Psoas muscle (tissue), 8 donors: ENCODE measurements at regions of chr10 and their contacts with region 1.

Region 1: GRCh38 chr10:75401569-75402485 is at the start of gene ZNF503:
- DNase-seq: peak; percentile 97
- ATAC-seq: peak; percentile 82 to 86 (median 85)
- H3K4me3 ChIP-seq: peak within 1 kb of the TSS; percentile 90
- H3K27ac ChIP-seq: peak within 1 kb of the TSS; percentile 87
- H3K4me1 ChIP-seq: peaks cover 11% of the 10 kb centered on the region
- H3K27me3 ChIP-seq: peaks cover 4 to 74% (median 5%) of the 10 kb centered on the region in 3 donors
- CTCF ChIP-seq: no peak
- total RNA-seq, gene ZNF503: 2.3 to 5.7 (median 4.7) TPM

Region 2: DNA sequence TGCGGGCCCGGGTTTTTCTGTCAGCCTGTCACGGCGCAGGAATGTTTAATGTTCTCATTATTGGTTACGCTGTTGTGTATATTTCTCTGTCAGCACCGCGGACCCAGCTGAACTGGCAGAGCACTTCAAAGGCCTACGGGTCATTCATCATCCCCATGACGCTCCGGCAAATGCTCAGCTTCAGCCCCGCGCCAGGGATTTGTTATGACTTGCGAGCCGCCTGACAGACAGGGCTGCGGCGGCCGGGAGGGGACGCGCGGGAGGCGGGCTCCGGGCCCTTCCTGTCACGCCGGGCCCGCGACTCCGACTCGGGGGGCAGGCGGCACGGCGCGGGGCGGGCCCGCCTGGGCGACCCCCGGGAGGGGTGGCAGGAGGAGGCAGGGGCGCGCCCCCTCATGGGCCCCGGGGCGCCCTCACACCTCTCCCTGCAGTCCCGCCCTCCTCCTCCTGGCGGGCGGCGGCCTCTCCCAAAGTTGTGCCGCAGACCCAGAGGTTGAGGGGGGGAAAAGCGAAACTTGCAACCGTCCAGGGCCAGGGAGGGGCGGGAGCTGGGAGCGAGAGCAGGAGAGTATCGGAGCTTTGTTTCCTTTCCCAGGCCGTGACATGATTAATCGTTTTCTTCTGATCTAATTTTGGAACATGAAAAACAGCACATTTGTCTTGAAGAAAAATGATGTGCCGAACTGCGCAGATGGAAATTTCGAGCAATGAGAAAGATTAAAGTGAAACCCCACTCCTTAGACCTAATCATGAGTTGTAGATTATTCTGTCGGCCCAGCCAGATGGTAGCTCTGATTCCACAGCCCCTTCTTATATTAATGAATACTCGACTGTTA is 106.7 kb before region 1 on chr10:
- intact Hi-C with region 1: loop called in 1 of 2 experiments (anchors 5 kb)
- DNase-seq: peak; percentile 85 to 90
- ATAC-seq: peak; percentile 83 to 87 (median 84)
- H3K4me3 ChIP-seq: peak overlapping the region; percentile 83
- H3K27ac ChIP-seq: peak overlapping the region; percentile 97
- H3K4me1 ChIP-seq: peaks cover 19% of the 10 kb centered on the region
- H3K27me3 ChIP-seq: no peaks in the 10 kb centered on the region
- CTCF ChIP-seq: peak; percentile 29

Region 3: DNA sequence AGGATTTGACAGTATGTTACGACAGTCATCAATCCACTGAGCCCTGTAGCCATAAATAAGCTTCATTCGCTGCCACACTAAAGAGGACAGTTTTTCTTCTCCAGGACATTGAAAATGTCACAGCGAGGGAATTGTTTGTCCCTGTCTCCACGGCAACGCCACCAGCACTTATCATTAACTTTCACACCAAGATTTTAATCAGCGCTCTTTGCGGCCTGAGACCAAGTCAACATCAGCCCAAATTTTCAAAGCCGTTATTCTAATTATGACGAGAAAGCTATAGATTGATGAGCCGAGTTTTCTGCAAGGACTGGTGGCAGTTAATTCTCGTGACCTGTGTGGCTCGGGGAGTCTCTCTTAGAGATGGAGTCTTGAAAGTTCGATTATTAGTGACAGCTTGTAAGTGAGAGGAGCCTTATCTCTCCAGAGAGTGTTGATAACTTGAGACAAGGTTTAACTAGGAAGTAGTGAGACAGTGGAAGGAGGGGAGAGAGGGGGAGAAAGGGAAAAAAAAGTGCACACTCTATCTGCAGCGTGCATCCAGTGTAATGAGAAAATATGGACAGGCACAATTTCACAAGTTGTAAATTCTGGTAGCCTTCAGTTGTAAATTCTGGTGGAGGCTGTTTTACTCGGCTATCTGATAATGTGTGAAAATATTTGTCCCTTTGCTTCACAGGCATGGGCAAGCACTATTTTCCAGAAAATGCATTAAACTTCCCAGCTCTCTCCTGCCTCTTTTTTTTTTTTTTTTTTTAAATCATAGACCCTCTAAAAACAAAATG is 502.9 kb after region 1 on chr10:
- intact Hi-C with region 1: loop called in 1 of 2 experiments (anchors 5 kb)
- DNase-seq: no peak
- ATAC-seq: no peak
- H3K4me3 ChIP-seq: no peak overlapping the region
- H3K27ac ChIP-seq: no peak overlapping the region
- H3K4me1 ChIP-seq: no peaks in the 10 kb centered on the region
- H3K27me3 ChIP-seq: peaks cover 0 to 4% (median 0%) of the 10 kb centered on the region in 3 donors
- CTCF ChIP-seq: no peak

Region 4: GRCh38 chr10:76036111-76036940 is 634.5 kb after region 1 on chr10:
- intact Hi-C with region 1: loop called (anchors 2 to 5 kb)
- DNase-seq: peak; percentile 72 to 82
- ATAC-seq: peak; percentile 84 to 97 (median 88)
- H3K4me3 ChIP-seq: peak overlapping the region; percentile 49
- H3K27ac ChIP-seq: no peak overlapping the region
- H3K4me1 ChIP-seq: peaks cover 3% of the 10 kb centered on the region
- H3K27me3 ChIP-seq: no peaks in the 10 kb centered on the region
- CTCF ChIP-seq: peak; percentile 91

Region 5: DNA sequence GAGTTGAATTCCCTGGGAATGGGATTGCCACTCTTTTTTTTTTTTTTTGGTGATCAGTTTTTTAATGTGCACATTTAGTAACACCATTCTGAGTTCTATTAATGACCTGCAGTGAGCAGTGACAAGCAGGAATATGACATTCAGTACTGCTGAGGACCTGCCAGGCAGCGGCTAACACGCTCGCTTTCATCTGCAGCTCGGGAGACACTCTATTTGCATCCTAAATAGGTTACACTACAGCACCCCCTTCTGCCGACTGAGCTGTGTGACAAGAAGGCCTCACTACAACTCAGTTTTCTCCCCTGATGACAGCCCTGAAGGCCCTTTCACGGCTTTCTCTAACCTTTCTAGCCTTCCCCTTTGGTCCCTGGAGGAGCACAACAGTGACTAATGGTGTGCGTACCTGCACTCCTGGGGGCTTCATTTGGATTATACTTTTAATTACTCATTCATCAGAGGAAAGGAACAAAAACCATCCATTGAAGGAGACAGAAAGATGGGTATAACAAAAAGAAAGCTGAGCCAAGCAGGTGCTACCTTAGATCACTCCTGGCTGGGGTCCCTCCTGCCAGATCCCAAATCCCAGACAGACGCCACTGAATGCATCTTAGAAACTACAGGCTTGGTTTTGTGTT is 902.0 kb after region 1 on chr10:
- intact Hi-C with region 1: loop called in 1 of 2 experiments (anchors 5 kb)
- DNase-seq: peak; percentile 52 to 73
- ATAC-seq: peak; percentile 77 to 89 (median 84)
- H3K4me3 ChIP-seq: no peak overlapping the region
- H3K27ac ChIP-seq: no peak overlapping the region
- H3K4me1 ChIP-seq: no peaks in the 10 kb centered on the region
- H3K27me3 ChIP-seq: peaks cover 0 to 3% (median 0%) of the 10 kb centered on the region in 3 donors
- CTCF ChIP-seq: peak; percentile 57

Region 6: GRCh38 chr10:76547352-76547972 is 1145.6 kb after region 1 on chr10:
- intact Hi-C with region 1: loop called (anchors 5 to 10 kb)
- DNase-seq: peak; percentile 62 to 75
- ATAC-seq: peak in 3 of 4 donors; percentile 65 to 75 (median 71)
- H3K4me3 ChIP-seq: no peak overlapping the region
- H3K27ac ChIP-seq: no peak overlapping the region
- H3K4me1 ChIP-seq: no peaks in the 10 kb centered on the region
- H3K27me3 ChIP-seq: no peaks in the 10 kb centered on the region
- CTCF ChIP-seq: peak; percentile 85